GM12878 (cell line): ENCODE measurements at regions of chr19 and their contacts with region 1.

Region 1: GRCh38 chr19:32345261-32346207 is at the start of gene ZNF507:
- DNase-seq: no peak
- ATAC-seq: peak; percentile 93
- H3K4me3 ChIP-seq: peak within 1 kb of the TSS; percentile 81
- H3K27ac ChIP-seq: peak within 1 kb of the TSS; percentile 79
- H3K4me1 ChIP-seq: peaks cover 4% of the 10 kb centered on the region; the same call in 1 of the 2 replicates
- H3K27me3 ChIP-seq: no peaks in the 10 kb centered on the region
- CTCF ChIP-seq: 0 out of 6 replicates have a peak, but pooled peaks of 1 of the 3 experiments have one; percentile 6
- EP300 ChIP-seq: no peak
- POLR2A ChIP-seq: peak; percentile 62
- RAD21 ChIP-seq: no peak
- polyA plus RNA-seq, gene ZNF507: 2.3 to 2.7 TPM

Region 2: DNA sequence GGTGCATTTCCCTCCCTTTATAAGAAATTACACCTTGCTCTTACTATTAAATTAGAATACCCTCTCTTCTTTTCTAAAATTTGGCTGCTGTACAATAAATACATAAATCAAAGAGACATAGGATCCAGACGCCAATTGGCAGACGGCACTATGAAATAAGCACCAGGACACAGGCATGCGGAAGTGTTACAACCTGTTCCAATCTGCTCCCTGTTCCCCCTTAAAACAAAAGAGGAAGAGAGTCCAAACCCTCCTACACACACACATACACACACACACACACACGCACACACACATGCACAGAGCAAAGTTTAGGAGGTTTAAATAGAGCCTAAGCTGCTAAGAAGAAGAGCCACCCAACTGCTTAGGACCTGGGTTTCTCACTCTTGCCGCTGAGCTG is 75.7 kb before region 1 on chr19:
- CTCF ChIA-PET with region 1: no interaction called
- POLR2A ChIA-PET with region 1: no interaction called
- RAD21 ChIA-PET with region 1: no interaction called
- SMC1A ChIA-PET with region 1: no interaction called
- in situ Hi-C with region 1: no loop called
- intact Hi-C with region 1: no loop called
- DNase-seq: no peak
- ATAC-seq: no peak
- H3K4me3 ChIP-seq: no peak overlapping the region
- H3K27ac ChIP-seq: no peak overlapping the region
- H3K4me1 ChIP-seq: no peaks in the 10 kb centered on the region
- H3K27me3 ChIP-seq: no peaks in the 10 kb centered on the region
- CTCF ChIP-seq: no peak
- EP300 ChIP-seq: no peak
- POLR2A ChIP-seq: no peak
- RAD21 ChIP-seq: no peak

Region 3: GRCh38 chr19:32357720-32358119 is 12.2 kb after region 1 on chr19:
- CTCF ChIA-PET with region 1: interaction called, 15 read pairs
- POLR2A ChIA-PET with region 1: no interaction called
- RAD21 ChIA-PET with region 1: interaction called, 3 read pairs
- SMC1A ChIA-PET with region 1: interaction called, 6 read pairs
- in situ Hi-C with region 1: no loop called
- intact Hi-C with region 1: no loop called
- DNase-seq: no peak
- ATAC-seq: no peak
- H3K4me3 ChIP-seq: no peak overlapping the region
- H3K27ac ChIP-seq: no peak overlapping the region
- H3K4me1 ChIP-seq: no peaks in the 10 kb centered on the region
- H3K27me3 ChIP-seq: no peaks in the 10 kb centered on the region
- CTCF ChIP-seq: peak in 1 of 3 experiments; percentile 21; a peak in 2 of 6 replicates
- EP300 ChIP-seq: no peak
- POLR2A ChIP-seq: no peak
- RAD21 ChIP-seq: no peak

Region 4: GRCh38 chr19:32405431-32406161 is 60.1 kb after region 1 on chr19 and contains the start of gene DPY19L3:
- CTCF ChIA-PET with region 1: no interaction called
- POLR2A ChIA-PET with region 1: no interaction called
- RAD21 ChIA-PET with region 1: no interaction called
- SMC1A ChIA-PET with region 1: no interaction called
- in situ Hi-C with region 1: no loop called
- intact Hi-C with region 1: loop called (anchors 5 kb)
- DNase-seq: peak; percentile 59
- ATAC-seq: peak; percentile 97
- H3K4me3 ChIP-seq: peak within 1 kb of the TSS; percentile 97
- H3K27ac ChIP-seq: peak within 1 kb of the TSS; percentile 97
- H3K4me1 ChIP-seq: peaks cover 12% of the 10 kb centered on the region
- H3K27me3 ChIP-seq: no peaks in the 10 kb centered on the region
- CTCF ChIP-seq: no peak
- EP300 ChIP-seq: no peak
- POLR2A ChIP-seq: peak; percentile 99
- RAD21 ChIP-seq: no peak
- polyA plus RNA-seq, gene DPY19L3: 2.5 to 3.2 TPM